ENCODE measurements at regions of chr11 and their contacts with region 1.

Region 1: DNA sequence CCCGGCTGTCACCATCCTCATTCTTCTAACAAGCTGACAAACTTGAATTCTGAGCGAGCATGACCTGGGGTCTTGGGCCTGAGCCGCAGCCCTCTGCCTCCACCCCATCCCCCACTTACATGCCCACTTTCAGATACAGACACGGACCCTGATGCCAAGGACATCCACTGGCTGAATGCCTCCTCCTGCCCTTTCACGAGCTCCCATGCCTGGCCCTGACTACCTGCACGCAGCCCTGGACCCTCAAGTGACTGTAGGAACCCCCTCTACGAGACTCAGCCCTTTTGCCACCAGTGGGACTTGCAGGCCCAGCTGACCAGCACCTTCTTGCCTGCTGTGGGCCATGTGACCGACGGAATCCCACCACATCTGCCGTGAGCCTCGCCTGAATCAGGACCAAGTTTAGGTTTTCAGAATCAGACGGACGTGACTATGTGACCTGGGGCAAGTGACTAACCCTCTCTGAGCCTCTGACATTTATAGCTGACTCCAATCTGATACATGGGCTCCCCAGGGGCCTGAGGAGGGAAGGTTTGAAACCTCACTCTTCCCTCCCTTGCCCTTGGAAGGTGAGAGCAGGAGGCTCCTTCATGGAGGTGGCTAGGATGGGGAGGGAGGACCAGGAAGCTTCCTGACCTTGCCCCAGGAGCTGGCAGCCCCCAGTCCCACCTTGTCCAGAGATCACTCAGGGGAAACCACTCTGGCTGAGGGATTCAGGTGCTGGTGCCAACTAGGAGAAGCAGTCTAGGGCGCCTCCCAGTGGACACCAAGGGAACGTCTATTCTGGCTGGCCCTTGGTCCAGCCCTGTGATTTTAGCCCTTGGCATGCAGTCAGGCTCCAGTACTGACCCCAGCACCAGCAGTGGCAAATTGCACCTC is 46.9 kb upstream of the SYT7 start:
- DNase-seq: peak in 1 of 2 experiments; percentile 92
- H3K4me3 ChIP-seq: no peak overlapping the region
- H3K27ac ChIP-seq: peak overlapping the region; percentile 76; the same call in 1 of the 2 replicates
- H3K4me1 ChIP-seq: peaks cover 6 to 25% (median 18%) of the 10 kb centered on the region in 4 experiments
- H3K27me3 ChIP-seq: no peaks in the 10 kb centered on the region
- CTCF ChIP-seq: peak; percentile 89 to 99 (median 97)
- EP300 ChIP-seq: no peak
- POLR2A ChIP-seq: no peak
- RAD21 ChIP-seq: peak; percentile 94 to 97

Region 2: DNA sequence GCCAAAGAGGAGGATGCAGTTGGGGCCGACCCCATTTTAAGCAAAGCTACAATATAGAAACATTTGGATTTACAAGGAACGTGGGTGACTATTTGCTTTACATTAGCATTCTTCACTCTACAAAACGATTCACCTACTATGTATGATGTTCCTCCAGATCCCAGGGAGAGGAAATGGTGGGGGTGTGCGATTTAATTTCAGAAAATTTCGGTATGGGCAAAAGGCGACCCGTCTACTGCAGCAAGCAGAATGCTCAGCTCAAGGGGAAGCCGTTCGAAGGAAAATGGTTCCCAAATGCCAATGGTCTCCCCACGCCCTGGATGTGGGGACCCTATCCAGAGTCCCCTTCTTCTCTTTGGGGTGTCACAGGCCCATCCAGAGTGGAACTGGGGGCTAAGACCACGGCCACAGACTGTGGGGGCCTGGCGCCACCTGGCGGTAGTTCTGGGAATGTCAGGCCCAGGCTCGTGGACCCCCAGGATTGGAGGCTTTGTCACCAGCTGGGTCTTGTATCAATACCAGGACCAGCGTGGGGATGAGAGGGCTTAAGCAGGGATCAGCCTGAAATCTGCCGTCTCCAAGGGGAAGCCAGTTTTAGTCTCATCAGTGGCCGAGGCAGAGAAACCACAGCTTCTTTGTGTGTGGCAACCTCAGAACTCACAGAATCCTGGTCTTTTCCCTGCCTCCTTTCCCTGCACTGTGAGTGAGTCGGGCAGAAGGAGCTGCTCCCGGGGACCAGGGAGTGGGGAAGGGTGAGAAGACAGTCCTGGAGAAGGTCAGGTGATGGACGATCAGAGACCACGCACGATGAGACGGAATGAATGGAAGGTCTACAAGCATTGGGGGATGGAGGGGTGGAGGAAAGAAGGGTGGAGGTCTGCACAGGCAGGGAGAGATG is 110.9 kb before region 1 on chr11:
- CTCF ChIA-PET with region 1: interaction called, 114 read pairs
- POLR2A ChIA-PET with region 1: interaction called, 3 read pairs
- DNase-seq: peak in 1 of 2 experiments; percentile 96
- H3K4me3 ChIP-seq: peak overlapping the region in 1 of 4 experiments; percentile 39; a peak in 1 of 8 replicates
- H3K27ac ChIP-seq: no peak overlapping the region
- H3K4me1 ChIP-seq: peaks cover 0 to 41% (median 27%) of the 10 kb centered on the region in 4 experiments; a peak in 6 of 7 replicates
- H3K27me3 ChIP-seq: no peaks in the 10 kb centered on the region; a peak in 2 of 7 replicates
- CTCF ChIP-seq: peak in 2 of 3 experiments; percentile 98; a peak in 3 of 4 replicates
- EP300 ChIP-seq: no peak
- POLR2A ChIP-seq: no peak
- RAD21 ChIP-seq: peak; percentile 98 to 99

Region 3: GRCh38 chr11:61541598-61541997 is 86.2 kb before region 1 on chr11:
- CTCF ChIA-PET with region 1: interaction called, 16 read pairs
- POLR2A ChIA-PET with region 1: no interaction called
- DNase-seq: no peak
- H3K4me3 ChIP-seq: no peak overlapping the region
- H3K27ac ChIP-seq: no peak overlapping the region
- H3K4me1 ChIP-seq: peaks cover 5 to 35% (median 18%) of the 10 kb centered on the region in 4 experiments
- H3K27me3 ChIP-seq: no peaks in the 10 kb centered on the region; a peak in 1 of 7 replicates
- CTCF ChIP-seq: no peak
- EP300 ChIP-seq: no peak
- POLR2A ChIP-seq: no peak
- RAD21 ChIP-seq: no peak

Region 4: GRCh38 chr11:61560751-61561150 is 67.1 kb before region 1 on chr11:
- CTCF ChIA-PET with region 1: interaction called, 82 read pairs
- POLR2A ChIA-PET with region 1: no interaction called
- DNase-seq: no peak
- H3K4me3 ChIP-seq: no peak overlapping the region
- H3K27ac ChIP-seq: no peak overlapping the region
- H3K4me1 ChIP-seq: peaks cover 0 to 7% (median 2%) of the 10 kb centered on the region in 4 experiments; a peak in 2 of 7 replicates
- H3K27me3 ChIP-seq: peaks cover 0 to 9% (median 8%) of the 10 kb centered on the region in 4 experiments; a peak in 4 of 7 replicates
- CTCF ChIP-seq: no peak
- EP300 ChIP-seq: no peak
- POLR2A ChIP-seq: no peak
- RAD21 ChIP-seq: no peak

Region 5: GRCh38 chr11:61602775-61603569 is 24.8 kb before region 1 on chr11:
- CTCF ChIA-PET with region 1: interaction called, 335 read pairs
- POLR2A ChIA-PET with region 1: interaction called, 4 read pairs
- DNase-seq: no peak
- H3K4me3 ChIP-seq: no peak overlapping the region
- H3K27ac ChIP-seq: no peak overlapping the region
- H3K4me1 ChIP-seq: peaks cover 5 to 22% (median 18%) of the 10 kb centered on the region in 4 experiments
- H3K27me3 ChIP-seq: no peaks in the 10 kb centered on the region; a peak in 1 of 7 replicates
- CTCF ChIP-seq: no peak
- EP300 ChIP-seq: no peak
- POLR2A ChIP-seq: no peak
- RAD21 ChIP-seq: no peak

Region 6: DNA sequence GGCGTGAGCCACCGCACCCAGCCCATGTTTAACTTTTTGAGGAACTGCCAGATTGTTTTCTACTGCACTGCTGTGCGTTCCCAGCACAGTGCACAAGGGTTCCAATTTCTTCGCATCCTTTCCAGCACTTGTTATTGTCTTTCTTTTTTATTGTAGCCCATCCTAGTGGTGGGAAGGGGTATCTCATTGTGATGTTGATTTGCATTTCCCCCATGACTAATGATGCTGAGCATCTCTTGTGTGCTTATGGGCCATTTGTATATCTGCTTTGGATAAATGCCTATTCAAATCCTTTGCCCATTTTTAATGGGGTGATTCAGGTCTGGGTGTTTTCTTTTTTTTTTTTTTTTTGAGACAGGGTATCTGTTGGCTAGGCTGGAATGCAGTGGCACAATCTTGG is 10.3 kb before region 1 on chr11:
- CTCF ChIA-PET with region 1: interaction called, 73 read pairs
- POLR2A ChIA-PET with region 1: interaction called, 4 read pairs
- DNase-seq: no peak
- H3K4me3 ChIP-seq: no peak overlapping the region
- H3K27ac ChIP-seq: no peak overlapping the region
- H3K4me1 ChIP-seq: peaks cover 0 to 7% (median 4%) of the 10 kb centered on the region in 4 experiments; a peak in 3 of 7 replicates
- H3K27me3 ChIP-seq: no peaks in the 10 kb centered on the region
- CTCF ChIP-seq: peak in 1 of 3 experiments; percentile 21; a peak in 1 of 4 replicates
- EP300 ChIP-seq: no peak
- POLR2A ChIP-seq: no peak
- RAD21 ChIP-seq: no peak

Region 7: GRCh38 chr11:62044639-62045121 is 416.9 kb after region 1 on chr11:
- CTCF ChIA-PET with region 1: no interaction called
- POLR2A ChIA-PET with region 1: no interaction called
- DNase-seq: no peak
- H3K4me3 ChIP-seq: no peak overlapping the region
- H3K27ac ChIP-seq: no peak overlapping the region
- H3K4me1 ChIP-seq: no peaks in the 10 kb centered on the region
- H3K27me3 ChIP-seq: no peaks in the 10 kb centered on the region
- CTCF ChIP-seq: no peak
- EP300 ChIP-seq: no peak
- POLR2A ChIP-seq: no peak
- RAD21 ChIP-seq: no peak